GM10248 (cell line): ENCODE measurements at regions of chr10 and their contacts with region 1.

Region 1: DNA sequence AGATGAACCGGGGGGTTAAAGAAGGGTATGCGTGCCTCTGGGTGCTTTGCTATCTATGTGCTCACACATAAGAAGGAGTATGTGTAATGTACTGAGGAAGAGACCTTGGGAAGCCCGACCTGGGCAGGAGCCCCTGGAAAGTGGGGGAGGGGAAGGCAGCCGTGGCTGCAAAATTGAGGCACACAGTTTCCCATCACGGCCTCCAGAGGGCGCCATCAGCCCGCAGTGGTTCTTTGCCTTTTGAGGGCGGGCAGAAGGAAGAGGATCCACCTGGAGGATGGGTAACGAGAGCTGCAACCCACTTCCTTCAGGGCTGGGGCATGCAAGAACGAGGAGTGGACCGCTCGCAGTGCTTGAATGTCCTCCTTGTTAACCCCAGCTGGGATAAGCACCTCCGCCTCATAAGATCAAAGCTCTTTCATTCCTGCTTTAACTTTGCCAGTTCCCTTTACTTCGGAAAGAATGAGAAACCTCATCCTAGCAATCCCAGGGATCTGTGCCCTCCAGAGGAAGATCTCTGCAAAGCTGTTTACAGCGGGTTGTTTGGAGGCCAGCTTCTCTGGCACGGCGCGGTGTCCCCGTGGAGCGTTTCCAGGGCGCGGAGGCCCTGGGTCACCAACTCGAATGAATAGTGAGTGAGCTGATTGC is 77.9 kb downstream of the PCGF5 start:
- DNase-seq: peak; percentile 82
- CTCF ChIP-seq: peak; percentile 95

Region 2: GRCh38 chr10:90912174-90912573 is 386.2 kb before region 1 on chr10:
- CTCF ChIA-PET with region 1: interaction called, 15 read pairs
- POLR2A ChIA-PET with region 1: interaction called, 6 read pairs
- DNase-seq: no peak
- CTCF ChIP-seq: no peak

Region 3: DNA sequence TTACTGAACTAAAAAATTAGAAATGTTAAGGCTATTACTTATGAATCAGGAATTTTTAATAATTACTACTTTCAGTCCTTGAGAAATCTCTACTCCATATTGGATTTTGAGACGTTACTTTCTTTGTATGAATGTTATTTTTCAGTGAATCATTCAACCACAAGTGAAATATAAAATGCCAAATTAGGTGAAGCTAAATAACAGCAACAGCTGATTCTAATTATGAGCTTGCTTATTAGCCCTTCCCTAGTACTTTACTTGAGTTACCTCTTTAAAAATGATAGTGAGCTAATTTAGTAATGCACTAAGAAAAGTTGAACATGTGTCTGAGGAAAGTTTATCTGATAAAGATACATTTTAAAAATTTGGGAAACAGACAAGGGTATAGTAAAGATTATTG is 26.5 kb before region 1 on chr10:
- CTCF ChIA-PET with region 1: interaction called, 10 read pairs
- POLR2A ChIA-PET with region 1: no interaction called
- DNase-seq: no peak
- CTCF ChIP-seq: no peak

Region 4: GRCh38 chr10:91313796-91314485 is 15.6 kb after region 1 on chr10:
- CTCF ChIA-PET with region 1: interaction called, 42 read pairs
- POLR2A ChIA-PET with region 1: no interaction called
- DNase-seq: no peak
- CTCF ChIP-seq: no peak

Region 5: DNA sequence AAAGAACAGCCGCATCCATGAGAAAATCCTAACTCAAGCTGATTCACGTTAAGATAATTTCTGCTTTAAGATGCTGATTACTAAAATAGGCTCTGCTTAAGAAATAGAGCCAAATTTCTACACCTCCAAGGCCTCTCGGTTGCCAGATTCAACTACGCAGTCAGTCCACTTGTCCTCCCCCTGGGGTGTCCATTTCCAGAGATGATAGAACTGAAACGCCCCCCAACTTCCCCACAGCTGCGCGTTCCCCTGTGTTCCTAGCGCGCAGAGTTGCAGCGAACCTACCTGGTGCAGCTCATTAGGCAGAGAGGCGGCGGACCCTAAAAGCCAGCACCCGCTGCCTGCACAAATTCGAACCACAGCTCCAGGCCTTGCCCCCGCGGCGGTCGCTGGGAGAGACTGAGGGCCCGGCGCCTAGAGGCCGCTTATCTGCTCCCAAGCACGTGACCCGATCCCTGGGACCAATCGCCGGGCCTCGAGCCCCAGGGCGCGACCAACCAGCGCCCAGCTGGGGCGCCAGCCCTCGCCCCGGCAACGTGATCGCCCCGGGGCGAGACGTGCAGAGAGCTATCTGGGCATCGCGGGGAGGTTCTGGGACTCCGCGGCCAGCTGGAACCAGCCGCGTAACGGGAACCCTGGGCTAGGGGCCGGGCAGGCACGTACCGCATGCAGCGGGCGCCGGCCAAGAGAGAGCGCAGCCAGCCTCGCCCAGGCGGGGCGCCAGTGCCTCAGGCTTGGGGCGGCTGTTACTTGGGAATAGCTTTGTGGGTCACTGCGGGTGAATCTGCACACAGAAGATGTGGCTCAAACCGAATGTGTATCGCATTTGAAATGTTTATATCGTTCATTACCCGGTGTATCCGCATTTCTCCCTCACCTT is 334.6 kb after region 1 on chr10 and contains the start of gene PPP1R3C:
- CTCF ChIA-PET with region 1: interaction called, 91 read pairs
- POLR2A ChIA-PET with region 1: no interaction called
- DNase-seq: peak; percentile 73
- CTCF ChIP-seq: peak; percentile 3

Region 6: DNA sequence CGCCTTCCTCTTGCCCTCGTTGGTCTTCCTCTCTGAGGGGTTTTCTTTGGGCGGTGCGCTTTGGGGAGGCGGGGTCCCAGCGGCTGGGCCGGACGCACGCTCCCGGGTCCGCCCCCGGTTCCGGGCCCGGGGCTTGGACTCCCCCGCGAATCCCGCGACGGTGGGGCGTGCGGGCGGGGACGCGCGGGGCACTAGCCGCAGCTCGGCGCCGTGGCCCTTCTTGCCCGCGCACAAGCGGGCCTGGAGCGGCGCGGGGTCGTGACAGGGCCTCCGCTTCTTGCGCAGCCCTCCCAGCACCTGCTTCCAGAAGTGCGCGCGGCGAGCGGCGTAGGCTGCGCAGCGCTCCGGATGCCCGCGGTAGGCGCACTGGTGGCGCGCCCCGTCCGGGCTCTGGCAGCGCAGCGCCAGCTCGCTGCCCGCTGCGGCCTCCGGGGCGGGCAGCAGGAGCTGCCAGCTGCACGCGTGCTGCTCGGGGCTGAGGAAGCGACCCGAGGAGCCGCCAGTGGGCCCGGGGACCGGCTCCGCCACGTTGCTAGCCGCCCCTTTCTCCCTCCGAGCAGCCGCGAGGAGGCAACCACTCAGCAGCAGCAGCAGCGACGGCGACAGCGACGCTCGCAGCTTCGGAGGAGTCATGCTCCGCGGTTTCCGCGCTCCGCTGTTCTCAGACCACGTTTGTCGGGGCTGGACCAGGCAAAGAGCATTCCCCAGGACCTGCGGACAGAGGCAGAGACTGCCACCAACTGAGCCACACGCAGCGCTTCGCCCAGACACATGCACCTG is 610.2 kb after region 1 on chr10:
- CTCF ChIA-PET with region 1: interaction called, 21 read pairs
- POLR2A ChIA-PET with region 1: no interaction called
- DNase-seq: peak; percentile 86
- CTCF ChIP-seq: peak; percentile 72